MCF 10A (cell line): ENCODE measurements at regions of chr11 and their contacts with region 1.

Region 1: GRCh38 chr11:12331239-12331874 is 46.0 kb upstream of the PARVA start:
- DNase-seq: peak; percentile 90
- H3K4me3 Mint-ChIP-seq: no peak overlapping the region
- H3K27ac Mint-ChIP-seq: no peak overlapping the region
- H3K4me1 Mint-ChIP-seq: peaks cover 4% of the 10 kb centered on the region
- H3K27me3 Mint-ChIP-seq: no peaks in the 10 kb centered on the region
- CTCF ChIP-seq: peak; percentile 89

Region 2: GRCh38 chr11:12318791-12319438 is 12.4 kb before region 1 on chr11:
- CTCF ChIA-PET with region 1: interaction called, 33 read pairs
- POLR2A ChIA-PET with region 1: no interaction called
- intact Hi-C with region 1: no loop called
- DNase-seq: no peak
- H3K4me3 Mint-ChIP-seq: no peak overlapping the region
- H3K27ac Mint-ChIP-seq: no peak overlapping the region
- H3K4me1 Mint-ChIP-seq: no peaks in the 10 kb centered on the region
- H3K27me3 Mint-ChIP-seq: no peaks in the 10 kb centered on the region
- CTCF ChIP-seq: no peak

Region 3: DNA sequence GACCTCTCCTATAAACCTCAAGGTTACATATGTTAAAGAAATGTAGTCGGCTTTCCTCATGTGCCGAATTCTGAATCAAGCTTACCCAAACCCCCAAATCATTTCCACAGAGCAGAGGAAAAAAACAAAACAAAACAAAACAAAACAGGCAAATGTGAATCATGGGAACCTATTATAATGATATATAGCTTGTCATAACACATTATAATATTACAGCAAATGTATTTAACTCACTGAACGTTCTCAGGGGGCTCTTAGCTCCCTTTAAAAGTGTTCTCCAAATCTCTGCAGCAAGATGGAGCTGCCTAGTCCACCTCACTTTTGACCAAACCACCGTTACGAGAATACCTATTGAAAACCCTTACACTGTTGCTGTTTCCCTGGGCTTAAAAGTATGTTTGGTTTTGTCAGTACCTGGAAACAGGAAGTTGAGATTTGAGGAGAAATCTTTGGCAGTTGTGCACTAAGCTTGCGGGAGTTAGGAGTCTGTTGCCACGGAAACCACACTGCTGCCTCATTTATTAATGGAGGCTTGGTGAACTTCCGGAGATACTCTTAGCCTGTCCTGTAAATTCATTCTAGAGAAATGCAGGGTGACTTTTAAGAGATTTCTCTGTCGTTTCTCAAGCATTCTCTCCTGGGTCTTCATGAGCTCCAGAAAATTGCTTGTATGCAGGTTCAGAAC is 510.7 kb after region 1 on chr11:
- CTCF ChIA-PET with region 1: interaction called, 10 read pairs
- POLR2A ChIA-PET with region 1: no interaction called
- intact Hi-C with region 1: no loop called
- DNase-seq: peak; percentile 62
- H3K4me3 Mint-ChIP-seq: no peak overlapping the region
- H3K27ac Mint-ChIP-seq: peak overlapping the region; percentile 83
- H3K4me1 Mint-ChIP-seq: peaks cover 47% of the 10 kb centered on the region
- H3K27me3 Mint-ChIP-seq: no peaks in the 10 kb centered on the region
- CTCF ChIP-seq: no peak

Region 4: GRCh38 chr11:12893787-12894672 is 562.7 kb after region 1 on chr11:
- CTCF ChIA-PET with region 1: interaction called, 44 read pairs
- POLR2A ChIA-PET with region 1: interaction called, 3 read pairs
- intact Hi-C with region 1: loop called (anchors 1 kb)
- DNase-seq: peak; percentile 55
- H3K4me3 Mint-ChIP-seq: no peak overlapping the region
- H3K27ac Mint-ChIP-seq: peak overlapping the region; percentile 85
- H3K4me1 Mint-ChIP-seq: peaks cover 12% of the 10 kb centered on the region
- H3K27me3 Mint-ChIP-seq: no peaks in the 10 kb centered on the region
- CTCF ChIP-seq: peak; percentile 73

Region 5: GRCh38 chr11:13152736-13153533 is 821.6 kb after region 1 on chr11:
- CTCF ChIA-PET with region 1: interaction called, 9 read pairs
- POLR2A ChIA-PET with region 1: no interaction called
- intact Hi-C with region 1: loop called (anchors 5 kb)
- DNase-seq: peak; percentile 60
- H3K4me3 Mint-ChIP-seq: no peak overlapping the region
- H3K27ac Mint-ChIP-seq: no peak overlapping the region
- H3K4me1 Mint-ChIP-seq: no peaks in the 10 kb centered on the region
- H3K27me3 Mint-ChIP-seq: no peaks in the 10 kb centered on the region
- CTCF ChIP-seq: peak; percentile 55